HepG2 (cell line): ENCODE measurements at regions of chr20 and their contacts with region 1.

Region 1: DNA sequence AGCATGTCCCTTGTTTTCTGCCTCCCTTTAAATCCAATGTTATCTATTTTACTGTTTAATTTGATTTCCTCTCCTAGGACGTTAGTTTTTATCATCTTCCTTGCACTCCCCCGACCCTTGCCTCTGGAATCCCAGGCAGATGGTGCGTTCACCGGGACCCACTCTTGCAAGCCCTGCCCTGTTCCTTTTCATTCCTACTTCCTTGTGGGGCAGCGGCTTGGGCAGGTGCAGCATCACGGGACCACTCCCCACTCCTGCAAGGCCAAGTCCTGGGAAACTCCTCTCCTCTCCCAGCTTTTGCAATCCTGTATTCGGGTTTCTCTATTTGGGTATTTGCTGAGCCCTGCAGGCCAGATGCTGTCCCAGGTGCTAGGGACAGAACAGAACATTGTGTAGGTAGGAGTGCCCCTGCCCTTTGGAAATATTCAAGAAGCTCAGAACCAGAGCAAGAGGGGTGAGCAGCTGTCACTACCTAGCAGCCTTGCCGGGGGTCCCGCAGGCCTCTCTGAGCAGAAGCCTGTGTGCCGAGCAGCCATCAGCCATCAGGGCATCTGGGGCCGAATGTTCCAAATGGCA is 5.7 kb upstream of the CDH4 start:
- DNase-seq: no peak
- ATAC-seq: no peak
- H3K4me3 ChIP-seq: no peak overlapping the region
- H3K27ac ChIP-seq: no peak overlapping the region
- H3K4me1 ChIP-seq: no peaks in the 10 kb centered on the region
- H3K27me3 ChIP-seq: peaks cover 5 to 63% of the 10 kb centered on the region in 2 experiments; a peak in 4 of 5 replicates
- CTCF ChIP-seq: no peak
- EP300 ChIP-seq: no peak
- POLR2A ChIP-seq: no peak
- RAD21 ChIP-seq: no peak

Region 2: DNA sequence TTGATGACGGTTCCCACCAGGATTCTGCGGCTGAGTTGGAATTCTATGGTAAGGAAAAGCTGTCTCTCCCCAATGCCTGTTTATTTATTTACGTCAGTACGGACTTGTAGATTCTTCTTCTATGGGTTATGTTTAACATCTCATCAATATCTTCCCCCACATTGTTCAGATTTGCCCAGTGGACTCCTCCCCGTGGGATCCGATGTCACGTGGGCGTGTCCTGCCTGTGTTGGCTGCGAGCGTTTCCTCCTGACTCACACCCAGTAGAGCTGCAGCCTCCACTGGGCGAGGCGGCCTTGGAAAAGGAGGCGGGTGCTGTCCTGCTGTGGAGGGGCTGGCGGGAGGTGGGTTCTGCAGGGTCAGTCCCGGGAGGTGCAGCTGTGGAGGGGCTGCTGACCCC is 1349.1 kb after region 1 on chr20:
- CTCF ChIA-PET with region 1: no interaction called
- POLR2A ChIA-PET with region 1: no interaction called
- in situ Hi-C with region 1: no loop called
- intact Hi-C with region 1: loop called (anchors 5 kb)
- DNase-seq: no peak
- ATAC-seq: peak; percentile 16; the same call in 1 of the 3 replicates
- H3K4me3 ChIP-seq: no peak overlapping the region
- H3K27ac ChIP-seq: no peak overlapping the region
- H3K4me1 ChIP-seq: no peaks in the 10 kb centered on the region
- H3K27me3 ChIP-seq: peaks cover 28 to 92% of the 10 kb centered on the region in 2 experiments
- CTCF ChIP-seq: no peak
- EP300 ChIP-seq: no peak
- POLR2A ChIP-seq: no peak
- RAD21 ChIP-seq: no peak